ENCODE measurements at regions of chr16 and their contacts with region 1.

Region 1: GRCh38 chr16:71687861-71688260 is 36.6 kb downstream of the PHLPP2 start:
- DNase-seq: no peak
- ATAC-seq: no peak
- H3K4me3 ChIP-seq: no peak overlapping the region
- H3K27ac ChIP-seq: no peak overlapping the region
- H3K4me1 ChIP-seq: no peaks in the 10 kb centered on the region
- H3K27me3 ChIP-seq: no peaks in the 10 kb centered on the region
- CTCF ChIP-seq: no peak
- POLR2A ChIP-seq: no peak
- RAD21 ChIP-seq: no peak

Region 2: DNA sequence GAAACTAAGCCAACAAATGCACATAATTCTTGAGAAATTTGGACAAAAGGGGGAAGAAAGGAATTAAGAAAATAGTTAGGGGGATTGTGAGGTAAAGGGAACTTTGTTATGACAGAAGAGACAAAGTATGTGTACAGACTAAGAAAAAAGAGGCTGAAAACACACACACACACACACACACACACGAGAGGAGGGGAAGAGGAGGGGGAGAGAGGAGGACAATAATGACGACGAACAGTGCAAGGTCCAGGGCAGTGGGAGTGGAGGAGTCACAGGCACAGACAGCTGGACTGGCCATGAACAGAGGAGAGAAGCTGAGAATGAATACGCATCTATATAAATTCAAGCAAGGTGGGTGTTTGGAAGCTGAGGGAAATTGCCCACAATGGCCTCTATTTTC is 17.3 kb before region 1 on chr16:
- CTCF ChIA-PET with region 1: no interaction called
- POLR2A ChIA-PET with region 1: interaction called, 18 read pairs
- dilution Hi-C with region 1: no loop called
- in situ Hi-C with region 1: no loop called
- intact Hi-C with region 1: no loop called
- DNase-seq: no peak
- ATAC-seq: no peak
- H3K4me3 ChIP-seq: no peak overlapping the region
- H3K27ac ChIP-seq: no peak overlapping the region
- H3K4me1 ChIP-seq: peaks cover 4% of the 10 kb centered on the region
- H3K27me3 ChIP-seq: no peaks in the 10 kb centered on the region
- CTCF ChIP-seq: no peak
- POLR2A ChIP-seq: no peak
- RAD21 ChIP-seq: no peak

Region 3: GRCh38 chr16:71762186-71762585 is 74.3 kb after region 1 on chr16:
- CTCF ChIA-PET with region 1: no interaction called
- POLR2A ChIA-PET with region 1: no interaction called
- dilution Hi-C with region 1: no loop called
- in situ Hi-C with region 1: no loop called
- intact Hi-C with region 1: no loop called
- DNase-seq: peak; percentile 57
- ATAC-seq: no peak
- H3K4me3 ChIP-seq: no peak overlapping the region
- H3K27ac ChIP-seq: no peak overlapping the region
- H3K4me1 ChIP-seq: no peaks in the 10 kb centered on the region; the same call in 1 of the 2 replicates
- H3K27me3 ChIP-seq: no peaks in the 10 kb centered on the region
- CTCF ChIP-seq: no peak
- POLR2A ChIP-seq: no peak
- RAD21 ChIP-seq: no peak